Naive thymus-derived CD8-positive, alpha-beta T cell (primary cell): ENCODE measurements at regions of chr9 and their contacts with region 1.

Region 1: GRCh38 chr9:133509179-133510079 is 15.3 kb downstream of the MYMK start:
- DNase-seq: peak in 6 of 10 donors; percentile 19 to 67 (median 54)
- ATAC-seq: peak; percentile 84 to 86
- H3K4me3 Mint-ChIP-seq: peak overlapping the region; percentile 78 to 92 (median 85)
- H3K27ac Mint-ChIP-seq: peak overlapping the region; percentile 91 to 99 (median 97)
- H3K4me1 Mint-ChIP-seq: peaks cover 9 to 33% (median 25%) of the 10 kb centered on the region in 4 donors
- H3K27me3 Mint-ChIP-seq: no peaks in the 10 kb centered on the region

Region 2: DNA sequence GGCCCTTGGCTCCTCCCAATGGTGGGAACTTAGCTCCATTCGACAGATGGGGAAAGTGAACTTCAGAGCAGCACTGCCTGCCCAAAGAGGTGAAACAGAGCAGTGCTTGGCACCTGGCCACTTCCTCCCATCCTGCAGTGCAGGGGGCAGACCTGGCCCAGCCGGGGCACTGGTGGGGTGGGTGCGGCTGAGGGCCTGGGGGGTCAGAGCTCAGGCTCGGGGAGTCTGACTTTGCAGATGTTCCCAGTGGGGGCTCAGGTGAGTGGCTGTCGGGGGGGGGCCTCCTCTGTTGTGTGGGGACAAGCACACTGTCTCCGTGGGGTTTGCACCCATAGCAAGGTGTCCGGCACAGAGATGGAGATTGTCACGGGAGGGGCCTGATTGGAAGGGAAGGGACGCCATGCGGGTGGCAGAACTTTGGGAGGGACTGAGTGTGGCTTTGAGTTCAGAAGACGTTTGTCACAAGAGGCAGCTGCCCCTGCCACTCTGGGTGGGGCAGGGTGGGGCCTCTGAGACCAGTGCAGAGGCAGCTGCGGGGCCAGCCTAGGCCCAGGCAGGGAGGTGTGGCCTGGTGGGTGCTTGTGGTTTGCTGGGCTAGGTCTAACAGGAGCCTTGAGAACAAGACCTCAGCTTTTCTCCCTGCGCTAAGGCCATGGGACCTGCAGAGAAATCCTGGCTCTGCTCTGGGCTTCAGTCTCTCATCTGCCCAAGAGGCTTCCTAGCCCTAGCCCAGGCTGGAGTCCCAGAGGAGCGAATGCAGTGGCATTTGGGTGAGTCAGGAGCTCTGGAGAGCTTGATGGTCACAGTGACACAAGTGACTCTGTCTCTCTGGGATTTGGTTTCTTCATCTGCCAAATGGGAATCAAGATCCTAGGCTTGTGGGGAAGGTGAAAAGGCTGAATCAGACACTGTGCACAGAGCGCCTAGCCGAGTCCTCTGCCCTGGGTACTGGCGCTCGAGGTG is 12.9 kb after region 1 on chr9:
- POLR2A ChIA-PET with region 1: interaction called, 13 read pairs
- DNase-seq: no peak
- ATAC-seq: no peak
- H3K4me3 Mint-ChIP-seq: no peak overlapping the region
- H3K27ac Mint-ChIP-seq: peak overlapping the region in 1 of 10 donors; percentile 16
- H3K4me1 Mint-ChIP-seq: peaks cover 4 to 16% (median 10%) of the 10 kb centered on the region in 4 donors
- H3K27me3 Mint-ChIP-seq: no peaks in the 10 kb centered on the region

Region 3: GRCh38 chr9:133534346-133535291 is 25.2 kb after region 1 on chr9 and contains the start of gene ADAMTSL2:
- POLR2A ChIA-PET with region 1: interaction called, 14 read pairs
- DNase-seq: peak; percentile 17 to 78 (median 60)
- ATAC-seq: peak; percentile 87 to 90
- H3K4me3 Mint-ChIP-seq: peak within 1 kb of the TSS; percentile 42 to 80 (median 64)
- H3K27ac Mint-ChIP-seq: peak within 1 kb of the TSS in 7 of 10 donors; percentile 21 to 75 (median 56)
- H3K4me1 Mint-ChIP-seq: peaks cover 11 to 30% (median 22%) of the 10 kb centered on the region in 4 donors
- H3K27me3 Mint-ChIP-seq: peaks cover 0 to 11% (median 0%) of the 10 kb centered on the region in 5 donors
- polyA plus RNA-seq, gene ADAMTSL2: 0.03 to 0.14 TPM in 2 of 3 donors, not detected in the other

Region 4: GRCh38 chr9:133558191-133559126 is 49.0 kb after region 1 on chr9:
- POLR2A ChIA-PET with region 1: no interaction called
- DNase-seq: no peak
- ATAC-seq: no peak
- H3K4me3 Mint-ChIP-seq: no peak overlapping the region
- H3K27ac Mint-ChIP-seq: peak overlapping the region in 6 of 10 donors; percentile 27 to 79 (median 62)
- H3K4me1 Mint-ChIP-seq: peaks cover 4 to 20% (median 9%) of the 10 kb centered on the region in 4 donors
- H3K27me3 Mint-ChIP-seq: peaks cover 0 to 12% (median 2%) of the 10 kb centered on the region in 5 donors

Region 5: GRCh38 chr9:133619791-133620190 is 110.4 kb after region 1 on chr9:
- POLR2A ChIA-PET with region 1: no interaction called
- DNase-seq: peak in 9 of 10 donors; percentile 38 to 69 (median 53)
- ATAC-seq: peak; percentile 98 to 99
- H3K4me3 Mint-ChIP-seq: peak overlapping the region; percentile 7 to 70 (median 52)
- H3K27ac Mint-ChIP-seq: peak overlapping the region in 4 of 10 donors; percentile 1 to 86 (median 54)
- H3K4me1 Mint-ChIP-seq: peaks cover 15 to 43% (median 38%) of the 10 kb centered on the region in 4 donors
- H3K27me3 Mint-ChIP-seq: peaks cover 0 to 9% (median 0%) of the 10 kb centered on the region in 5 donors

Region 6: DNA sequence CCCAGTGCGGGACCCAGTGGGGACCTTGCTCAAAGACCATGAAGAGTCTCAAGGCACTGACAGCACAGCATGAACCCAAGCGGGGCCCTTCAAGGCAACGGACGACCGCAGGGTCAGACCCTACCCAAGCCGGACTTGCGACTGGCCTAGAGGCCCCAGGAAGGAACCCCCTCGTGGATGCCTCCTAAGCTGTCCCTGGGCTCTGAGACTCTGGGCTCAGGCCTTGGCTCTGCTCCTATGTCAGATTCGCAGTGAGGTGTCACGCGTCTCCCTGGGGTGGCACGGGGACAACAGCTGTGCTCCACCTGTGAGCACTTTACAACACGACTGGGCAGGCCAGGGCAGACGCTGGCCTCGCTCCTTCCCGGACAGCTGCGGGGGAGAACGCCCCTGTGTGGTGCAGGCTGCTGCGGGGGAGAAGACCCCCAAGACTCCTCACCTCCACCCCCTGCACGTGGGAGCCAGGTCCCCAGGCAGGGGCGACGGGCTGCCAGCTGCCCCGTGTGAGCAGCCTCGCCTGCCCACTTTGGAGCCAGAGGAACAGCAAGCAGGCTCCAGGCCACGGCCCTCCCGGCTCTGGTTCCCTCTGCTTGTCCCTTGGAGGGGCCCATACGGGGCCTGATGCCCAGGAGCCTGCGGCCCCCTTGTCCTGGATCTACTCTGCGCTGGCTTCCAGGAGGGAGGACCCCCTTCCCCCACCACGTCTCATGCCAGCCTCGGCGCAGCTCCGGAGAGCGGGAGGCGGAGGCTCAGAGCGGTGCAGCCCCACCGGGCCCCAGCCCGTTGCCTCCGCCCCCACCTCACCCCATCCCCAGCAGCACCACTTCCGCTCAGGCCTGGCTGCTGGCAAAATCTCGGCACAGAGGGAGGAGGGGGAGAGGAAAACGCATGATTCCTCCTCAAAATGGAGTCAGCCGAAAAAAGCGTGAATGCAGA is 192.7 kb after region 1 on chr9:
- POLR2A ChIA-PET with region 1: interaction called, 13 read pairs
- DNase-seq: peak; percentile 47 to 81 (median 60)
- ATAC-seq: peak; percentile 82 to 85
- H3K4me3 Mint-ChIP-seq: peak overlapping the region; percentile 81 to 92 (median 86)
- H3K27ac Mint-ChIP-seq: peak overlapping the region; percentile 91 to 98 (median 96)
- H3K4me1 Mint-ChIP-seq: peaks cover 21 to 60% (median 48%) of the 10 kb centered on the region in 4 donors
- H3K27me3 Mint-ChIP-seq: no peaks in the 10 kb centered on the region